CD4-positive, alpha-beta T cell (primary cell): ENCODE measurements at regions of chr7 and their contacts with region 1.

Region 1: GRCh38 chr7:100428199-100428966 is at the start of gene ZCWPW1:
- DNase-seq: peak; percentile 94 to 99 (median 97)
- ATAC-seq: peak; percentile 61
- H3K4me3 ChIP-seq: peak within 1 kb of the TSS; percentile 96
- H3K4me3 Mint-ChIP-seq: peak within 1 kb of the TSS; percentile 100
- H3K27ac ChIP-seq: peak within 1 kb of the TSS; percentile 100
- H3K27ac Mint-ChIP-seq: peak within 1 kb of the TSS; percentile 100
- H3K4me1 ChIP-seq: peaks cover 49% of the 10 kb centered on the region
- H3K4me1 Mint-ChIP-seq: peaks cover 40% of the 10 kb centered on the region
- H3K27me3 ChIP-seq: no peaks in the 10 kb centered on the region
- H3K27me3 Mint-ChIP-seq: peaks cover 11% of the 10 kb centered on the region
- CTCF ChIP-seq: no peak
- total RNA-seq, gene ZCWPW1: 4.4 to 6.5 TPM

Region 2: GRCh38 chr7:99408379-99409191 is 1019.8 kb before region 1 on chr7 and contains the starts of genes BUD31 and PDAP1:
- CTCF ChIA-PET with region 1: no interaction called
- POLR2A ChIA-PET with region 1: interaction called, 18 read pairs
- intact Hi-C with region 1: no loop called
- DNase-seq: peak; percentile 90 to 98 (median 94)
- ATAC-seq: peak; percentile 86
- H3K4me3 ChIP-seq: peak within 1 kb of the TSS; percentile 99
- H3K4me3 Mint-ChIP-seq: peak within 1 kb of the TSS; percentile 93
- H3K27ac ChIP-seq: peak within 1 kb of the TSS; percentile 98 to 99
- H3K27ac Mint-ChIP-seq: peak within 1 kb of the TSS; percentile 87
- H3K4me1 ChIP-seq: peaks cover 55% of the 10 kb centered on the region
- H3K4me1 Mint-ChIP-seq: peaks cover 58% of the 10 kb centered on the region
- H3K27me3 ChIP-seq: no peaks in the 10 kb centered on the region
- H3K27me3 Mint-ChIP-seq: no peaks in the 10 kb centered on the region
- CTCF ChIP-seq: no peak
- total RNA-seq, gene BUD31: 147 to 153 TPM
- total RNA-seq, gene PDAP1: 35.0 to 38.0 TPM

Region 3: GRCh38 chr7:100126931-100127865 is 301.2 kb before region 1 on chr7 and contains the start of gene MBLAC1:
- CTCF ChIA-PET with region 1: no interaction called
- POLR2A ChIA-PET with region 1: interaction called, 11 read pairs
- intact Hi-C with region 1: no loop called
- DNase-seq: peak; percentile 87 to 97 (median 91)
- ATAC-seq: peak; percentile 80
- H3K4me3 ChIP-seq: peak within 1 kb of the TSS; percentile 96
- H3K4me3 Mint-ChIP-seq: peak within 1 kb of the TSS; percentile 100
- H3K27ac ChIP-seq: peak within 1 kb of the TSS; percentile 96 to 99
- H3K27ac Mint-ChIP-seq: peak within 1 kb of the TSS; percentile 100
- H3K4me1 ChIP-seq: peaks cover 39% of the 10 kb centered on the region
- H3K4me1 Mint-ChIP-seq: peaks cover 31% of the 10 kb centered on the region
- H3K27me3 ChIP-seq: no peaks in the 10 kb centered on the region
- H3K27me3 Mint-ChIP-seq: no peaks in the 10 kb centered on the region
- CTCF ChIP-seq: no peak
- total RNA-seq, gene MBLAC1: 3.7 to 4.4 TPM

Region 4: DNA sequence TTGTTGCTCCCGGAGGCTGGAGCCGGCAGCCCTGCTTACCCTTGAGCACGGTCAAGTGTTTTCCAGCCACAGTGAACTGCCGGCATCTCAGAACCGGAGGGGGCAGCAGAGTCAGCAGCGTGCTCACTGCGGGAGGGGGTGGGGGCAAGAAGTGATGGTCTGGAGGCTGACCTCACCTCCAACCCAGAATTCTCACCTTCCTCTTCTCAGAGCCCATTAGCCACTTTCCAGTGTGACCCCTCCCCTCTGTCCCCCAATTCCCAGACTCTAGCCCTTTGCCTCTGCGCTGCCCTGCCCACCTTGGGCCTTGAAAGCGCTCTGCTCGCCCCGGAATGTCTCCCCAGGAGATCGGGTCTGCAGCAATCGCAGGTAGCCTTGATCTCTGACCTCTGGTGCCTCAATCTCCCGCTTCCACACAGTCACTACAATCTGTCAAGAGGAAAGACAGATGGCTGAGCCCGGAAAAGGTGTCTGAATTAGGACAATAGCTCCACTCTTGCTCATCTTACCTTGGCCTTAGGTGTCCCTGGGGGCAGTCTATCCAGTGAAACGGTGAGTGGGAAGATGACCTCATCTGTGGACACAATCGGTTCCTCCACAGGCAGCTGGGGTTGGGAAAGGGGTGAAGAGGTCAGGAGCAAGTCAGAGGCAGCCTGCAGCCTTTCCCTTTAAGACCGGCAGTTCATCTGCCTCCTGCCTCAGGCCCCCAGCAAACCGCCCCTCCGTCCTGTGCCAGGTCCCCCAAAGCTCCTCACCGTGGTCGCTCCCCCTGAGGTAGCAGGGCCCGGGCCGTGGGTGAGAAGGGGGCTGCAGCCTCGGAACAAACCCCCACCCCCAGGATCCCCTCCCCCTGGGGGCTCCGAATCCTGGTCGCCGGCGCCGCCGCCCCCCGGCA is 270.8 kb before region 1 on chr7:
- CTCF ChIA-PET with region 1: no interaction called
- POLR2A ChIA-PET with region 1: no interaction called
- intact Hi-C with region 1: no loop called
- DNase-seq: peak in 1 of 14 experiments; percentile 39
- ATAC-seq: no peak
- H3K4me3 ChIP-seq: peak overlapping the region; percentile 71
- H3K4me3 Mint-ChIP-seq: peak overlapping the region; percentile 81
- H3K27ac ChIP-seq: peak overlapping the region; percentile 40 to 87
- H3K27ac Mint-ChIP-seq: peak overlapping the region; percentile 76
- H3K4me1 ChIP-seq: peaks cover 57% of the 10 kb centered on the region
- H3K4me1 Mint-ChIP-seq: peaks cover 55% of the 10 kb centered on the region
- H3K27me3 ChIP-seq: no peaks in the 10 kb centered on the region
- H3K27me3 Mint-ChIP-seq: no peaks in the 10 kb centered on the region
- CTCF ChIP-seq: no peak

Region 5: GRCh38 chr7:100271716-100272537 is 156.5 kb before region 1 on chr7:
- CTCF ChIA-PET with region 1: no interaction called
- POLR2A ChIA-PET with region 1: interaction called, 12 read pairs
- intact Hi-C with region 1: no loop called
- DNase-seq: peak; percentile 97 to 100 (median 98)
- ATAC-seq: peak; percentile 91
- H3K4me3 ChIP-seq: peak overlapping the region; percentile 52
- H3K4me3 Mint-ChIP-seq: peak overlapping the region; percentile 85
- H3K27ac ChIP-seq: no peak overlapping the region
- H3K27ac Mint-ChIP-seq: peak overlapping the region; percentile 69
- H3K4me1 ChIP-seq: peaks cover 17% of the 10 kb centered on the region
- H3K4me1 Mint-ChIP-seq: peaks cover 8% of the 10 kb centered on the region
- H3K27me3 ChIP-seq: no peaks in the 10 kb centered on the region
- H3K27me3 Mint-ChIP-seq: no peaks in the 10 kb centered on the region
- CTCF ChIP-seq: no peak

Region 6: GRCh38 chr7:100478966-100479665 is 50.7 kb after region 1 on chr7 and contains the start of gene TSC22D4:
- CTCF ChIA-PET with region 1: no interaction called
- POLR2A ChIA-PET with region 1: interaction called, 32 read pairs
- intact Hi-C with region 1: no loop called
- DNase-seq: peak; percentile 85 to 97 (median 93)
- ATAC-seq: peak; percentile 75
- H3K4me3 ChIP-seq: peak within 1 kb of the TSS; percentile 100
- H3K4me3 Mint-ChIP-seq: peak within 1 kb of the TSS; percentile 97
- H3K27ac ChIP-seq: peak within 1 kb of the TSS; percentile 73 to 84
- H3K27ac Mint-ChIP-seq: peak within 1 kb of the TSS; percentile 83
- H3K4me1 ChIP-seq: peaks cover 70% of the 10 kb centered on the region
- H3K4me1 Mint-ChIP-seq: peaks cover 49% of the 10 kb centered on the region
- H3K27me3 ChIP-seq: no peaks in the 10 kb centered on the region
- H3K27me3 Mint-ChIP-seq: no peaks in the 10 kb centered on the region
- CTCF ChIP-seq: no peak
- total RNA-seq, gene TSC22D4: 34.6 to 36.5 TPM

Region 7: GRCh38 chr7:100705753-100706671 is 277.6 kb after region 1 on chr7 and contains the start of gene POP7:
- CTCF ChIA-PET with region 1: interaction called, 4 read pairs
- POLR2A ChIA-PET with region 1: interaction called, 36 read pairs
- intact Hi-C with region 1: no loop called
- DNase-seq: peak; percentile 95 to 99 (median 98)
- ATAC-seq: peak; percentile 93
- H3K4me3 ChIP-seq: peak within 1 kb of the TSS; percentile 100
- H3K4me3 Mint-ChIP-seq: peak within 1 kb of the TSS; percentile 98
- H3K27ac ChIP-seq: peak within 1 kb of the TSS; percentile 82 to 93
- H3K27ac Mint-ChIP-seq: peak within 1 kb of the TSS; percentile 85
- H3K4me1 ChIP-seq: peaks cover 24% of the 10 kb centered on the region
- H3K4me1 Mint-ChIP-seq: peaks cover 14% of the 10 kb centered on the region
- H3K27me3 ChIP-seq: no peaks in the 10 kb centered on the region
- H3K27me3 Mint-ChIP-seq: no peaks in the 10 kb centered on the region
- CTCF ChIP-seq: no peak
- total RNA-seq, gene POP7: 7.4 to 7.5 TPM